ENCODE measurements at regions of chr14 and their contacts with region 1.

Region 1: GRCh38 chr14:105861985-105862465 is 335.6 kb downstream of the TMEM121 start:
- DNase-seq: peak; percentile 88
- ATAC-seq: peak; percentile 41
- H3K4me3 ChIP-seq: peak overlapping the region; percentile 84
- H3K27ac ChIP-seq: peak overlapping the region; percentile 98
- H3K4me1 ChIP-seq: no peaks in the 10 kb centered on the region
- H3K27me3 ChIP-seq: no peaks in the 10 kb centered on the region
- CTCF ChIP-seq: no peak
- EP300 ChIP-seq: peak; percentile 99 to 100
- POLR2A ChIP-seq: no peak
- RAD21 ChIP-seq: no peak

Region 2: DNA sequence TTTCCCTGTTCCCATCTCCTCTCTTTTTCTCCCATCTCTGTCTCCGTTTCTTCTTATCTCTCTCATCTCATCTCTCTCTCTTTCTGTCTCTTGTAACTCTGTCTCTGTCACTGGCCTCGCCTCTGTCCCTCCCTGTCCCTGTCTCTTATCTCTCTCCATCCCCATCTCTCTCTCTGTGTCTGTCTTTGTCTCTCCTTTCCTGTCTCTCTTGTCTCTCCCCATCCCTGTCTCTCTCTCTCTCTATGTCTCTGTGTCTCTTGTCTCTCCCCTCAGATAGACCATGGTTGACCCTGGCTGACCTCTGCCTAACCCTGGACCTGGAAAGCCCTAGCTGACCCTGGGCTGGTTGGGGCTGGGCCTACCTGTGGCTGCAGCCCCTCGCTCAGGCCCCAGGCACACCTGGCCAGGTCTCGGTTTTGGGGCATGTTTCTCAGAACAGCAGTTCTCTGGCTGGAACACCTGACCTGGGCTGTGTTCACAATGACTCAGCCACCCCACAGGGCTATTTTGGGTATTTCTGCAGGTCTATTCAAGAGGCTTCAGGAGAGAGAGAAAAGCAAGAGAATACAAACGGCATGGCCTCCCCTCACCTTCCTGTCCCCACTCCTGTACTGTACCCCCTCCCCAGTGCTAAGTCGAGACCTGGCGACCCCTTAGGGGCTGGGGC is 161.3 kb before region 1 on chr14:
- CTCF ChIA-PET with region 1: no interaction called
- POLR2A ChIA-PET with region 1: interaction called, 3 read pairs
- RAD21 ChIA-PET with region 1: no interaction called
- SMC1A ChIA-PET with region 1: no interaction called
- in situ Hi-C with region 1: no loop called
- intact Hi-C with region 1: loop called (anchors 5 kb)
- DNase-seq: peak; percentile 77
- ATAC-seq: peak; percentile 63
- H3K4me3 ChIP-seq: peak overlapping the region; percentile 5; the same call in 1 of the 2 replicates
- H3K27ac ChIP-seq: peak overlapping the region; percentile 98
- H3K4me1 ChIP-seq: peaks cover 41% of the 10 kb centered on the region
- H3K27me3 ChIP-seq: no peaks in the 10 kb centered on the region
- CTCF ChIP-seq: no peak
- EP300 ChIP-seq: peak; percentile 46 to 82; a peak in 1 of 4 replicates
- POLR2A ChIP-seq: peak; percentile 67
- RAD21 ChIP-seq: 0 out of 2 replicates have a peak, but pooled peaks have one; percentile 1

Region 3: GRCh38 chr14:106115401-106115800 is 253.4 kb after region 1 on chr14:
- CTCF ChIA-PET with region 1: interaction called, 15 read pairs
- POLR2A ChIA-PET with region 1: no interaction called
- RAD21 ChIA-PET with region 1: interaction called, 4 read pairs
- SMC1A ChIA-PET with region 1: no interaction called
- in situ Hi-C with region 1: no loop called
- intact Hi-C with region 1: no loop called
- DNase-seq: no peak
- ATAC-seq: no peak
- H3K4me3 ChIP-seq: no peak overlapping the region
- H3K27ac ChIP-seq: no peak overlapping the region
- H3K4me1 ChIP-seq: no peaks in the 10 kb centered on the region
- H3K27me3 ChIP-seq: no peaks in the 10 kb centered on the region
- CTCF ChIP-seq: no peak
- EP300 ChIP-seq: no peak
- POLR2A ChIP-seq: no peak
- RAD21 ChIP-seq: no peak

Region 4: DNA sequence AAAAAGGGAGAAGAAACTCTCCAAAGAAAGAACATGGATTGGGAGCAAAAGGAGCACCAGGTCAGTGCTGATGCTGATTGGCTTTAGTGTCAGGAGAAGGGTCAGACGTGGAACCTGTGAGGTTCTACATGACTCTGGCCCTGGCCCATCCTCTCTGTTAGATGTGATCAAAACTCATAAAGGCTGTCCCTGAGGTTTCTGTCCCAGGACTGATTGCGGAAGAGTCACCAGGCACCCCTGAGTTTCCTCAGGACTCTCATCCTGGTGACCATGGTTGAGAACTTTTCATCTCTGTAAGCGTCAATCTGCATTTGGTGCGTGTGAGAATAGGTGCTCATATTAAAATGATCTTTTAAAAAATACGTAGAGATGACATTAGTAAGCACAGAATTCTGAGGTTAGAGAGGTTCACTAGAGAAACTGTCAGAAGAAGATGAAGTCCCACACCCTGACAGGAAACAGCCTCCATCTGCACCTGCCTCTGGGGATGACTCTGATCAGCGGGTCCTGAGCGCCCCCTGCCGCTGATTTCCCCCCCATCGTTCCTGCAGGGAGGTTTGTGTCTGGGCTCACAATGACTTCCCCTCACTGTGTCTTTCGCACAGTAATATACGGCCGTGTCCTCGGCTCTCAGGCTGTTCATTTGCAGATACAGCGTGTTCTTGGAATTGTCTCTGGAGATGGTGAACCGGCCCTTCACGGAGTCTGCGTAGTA is 406.1 kb after region 1 on chr14:
- CTCF ChIA-PET with region 1: interaction called, 180 read pairs
- POLR2A ChIA-PET with region 1: interaction called, 88 read pairs
- RAD21 ChIA-PET with region 1: interaction called, 119 read pairs
- SMC1A ChIA-PET with region 1: interaction called, 29 read pairs
- in situ Hi-C with region 1: no loop called
- intact Hi-C with region 1: no loop called
- DNase-seq: no peak
- ATAC-seq: no peak
- H3K4me3 ChIP-seq: no peak overlapping the region
- H3K27ac ChIP-seq: no peak overlapping the region
- H3K4me1 ChIP-seq: no peaks in the 10 kb centered on the region
- H3K27me3 ChIP-seq: peaks cover 0 to 8% of the 10 kb centered on the region in 2 experiments; a peak in 2 of 4 replicates
- CTCF ChIP-seq: peak; percentile 30 to 65 (median 45); a peak in 5 of 6 replicates
- EP300 ChIP-seq: no peak
- POLR2A ChIP-seq: no peak
- RAD21 ChIP-seq: peak; percentile 73

Measured in GM12878 (cell line).